HCT116 (cell line): ENCODE measurements at regions of chr9 and their contacts with region 1.

Region 1: GRCh38 chr9:91758491-91758981 is 191.5 kb downstream of the ROR2 start:
- DNase-seq: peak; percentile 32
- ATAC-seq: peak; percentile 97
- H3K4me3 ChIP-seq: no peak overlapping the region
- H3K27ac ChIP-seq: no peak overlapping the region
- H3K4me1 ChIP-seq: no peaks in the 10 kb centered on the region
- H3K27me3 ChIP-seq: no peaks in the 10 kb centered on the region
- CTCF ChIP-seq: peak; percentile 54 to 87 (median 86); a peak in 5 of 6 replicates
- POLR2A ChIP-seq: no peak
- RAD21 ChIP-seq: peak; percentile 72

Region 2: GRCh38 chr9:91949946-91950664 is 191.6 kb after region 1 on chr9 and contains the start of gene ROR2:
- CTCF ChIA-PET with region 1: interaction called, 11 read pairs
- POLR2A ChIA-PET with region 1: no interaction called
- RAD21 ChIA-PET with region 1: interaction called, 3 to 5 read pairs
- intact Hi-C with region 1: no loop called
- DNase-seq: peak; percentile 37
- ATAC-seq: peak; percentile 84
- H3K4me3 ChIP-seq: peak within 1 kb of the TSS; percentile 80 to 84
- H3K27ac ChIP-seq: peak within 1 kb of the TSS; percentile 78
- H3K4me1 ChIP-seq: peaks cover 14 to 19% of the 10 kb centered on the region in 2 experiments
- H3K27me3 ChIP-seq: no peaks in the 10 kb centered on the region
- CTCF ChIP-seq: peak; percentile 34 to 61 (median 46); a peak in 4 of 6 replicates
- POLR2A ChIP-seq: no peak
- RAD21 ChIP-seq: peak; percentile 49
- total RNA-seq, gene ROR2: 15.7 TPM

Region 3: DNA sequence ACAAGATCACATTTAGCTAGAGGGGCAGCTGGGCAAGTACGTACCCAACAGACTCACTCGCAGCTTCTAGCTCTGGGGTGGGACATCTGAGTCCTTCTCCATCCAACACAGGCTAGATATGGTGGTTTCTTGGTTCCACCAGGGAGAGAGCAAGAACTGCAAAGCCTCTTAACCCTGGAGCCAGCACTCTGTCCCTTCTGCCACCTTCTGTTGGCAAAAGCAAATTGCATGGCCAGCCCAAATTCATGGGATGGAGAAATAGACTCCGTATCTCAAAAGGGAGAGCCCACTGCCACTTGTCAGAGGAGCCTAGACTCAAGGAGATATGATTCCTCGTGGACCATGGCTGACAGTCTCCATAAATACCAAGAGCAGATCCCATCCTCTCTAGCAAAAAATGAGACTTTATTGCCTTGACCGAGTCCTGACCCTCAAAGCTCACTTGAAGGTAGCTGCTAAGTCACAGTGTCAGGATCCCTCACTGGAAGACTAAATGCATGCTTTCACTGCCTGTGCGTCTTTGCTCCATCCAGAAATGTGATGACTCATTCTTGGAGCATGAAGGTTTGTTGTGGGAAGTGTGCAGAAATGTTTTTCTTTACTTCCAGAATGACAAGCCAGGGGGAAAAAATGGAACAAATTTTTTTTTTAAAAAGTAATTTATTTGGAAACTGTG is 220.3 kb after region 1 on chr9:
- CTCF ChIA-PET with region 1: interaction called, 5 read pairs
- POLR2A ChIA-PET with region 1: no interaction called
- RAD21 ChIA-PET with region 1: interaction called in 1 of 2 experiments, 4 read pairs
- intact Hi-C with region 1: loop called (anchors 2 kb)
- DNase-seq: peak; percentile 26
- ATAC-seq: peak; percentile 94
- H3K4me3 ChIP-seq: no peak overlapping the region
- H3K27ac ChIP-seq: no peak overlapping the region; the same call in 1 of the 2 replicates
- H3K4me1 ChIP-seq: peaks cover 11% of the 10 kb centered on the region in 2 experiments; a peak in 3 of 4 replicates
- H3K27me3 ChIP-seq: no peaks in the 10 kb centered on the region
- CTCF ChIP-seq: peak; percentile 55 to 68 (median 61); a peak in 5 of 6 replicates
- POLR2A ChIP-seq: no peak
- RAD21 ChIP-seq: peak; percentile 71